SK-N-SH (cell line): ENCODE measurements at regions of chr2 and their contacts with region 1.

Region 1: DNA sequence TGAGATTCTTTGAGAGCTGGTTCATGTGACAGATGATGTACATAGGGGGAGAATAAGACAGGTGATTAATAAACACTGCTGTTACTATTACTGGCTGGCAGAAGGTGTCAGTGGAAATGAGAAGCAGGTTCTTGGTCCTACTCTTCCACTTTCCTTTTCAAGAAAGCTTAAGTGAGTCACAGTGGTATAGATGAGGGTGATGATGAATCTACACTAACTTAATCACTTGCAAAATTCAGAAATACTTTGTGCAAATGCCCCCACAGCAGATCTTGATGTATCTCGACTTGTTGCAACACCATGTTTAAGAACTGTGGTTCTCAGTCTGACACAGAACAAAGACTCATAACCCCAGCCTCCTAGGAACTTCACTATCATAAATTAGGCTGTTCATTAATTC is 35.9 kb upstream of the MGAT5 start:
- DNase-seq: no peak
- H3K4me3 ChIP-seq: no peak overlapping the region
- H3K27ac ChIP-seq: no peak overlapping the region
- H3K4me1 ChIP-seq: peaks cover 0 to 19% of the 10 kb centered on the region in 2 experiments; a peak in 1 of 4 replicates
- H3K27me3 ChIP-seq: no peaks in the 10 kb centered on the region
- CTCF ChIP-seq: no peak
- EP300 ChIP-seq: no peak
- RAD21 ChIP-seq: no peak

Region 2: DNA sequence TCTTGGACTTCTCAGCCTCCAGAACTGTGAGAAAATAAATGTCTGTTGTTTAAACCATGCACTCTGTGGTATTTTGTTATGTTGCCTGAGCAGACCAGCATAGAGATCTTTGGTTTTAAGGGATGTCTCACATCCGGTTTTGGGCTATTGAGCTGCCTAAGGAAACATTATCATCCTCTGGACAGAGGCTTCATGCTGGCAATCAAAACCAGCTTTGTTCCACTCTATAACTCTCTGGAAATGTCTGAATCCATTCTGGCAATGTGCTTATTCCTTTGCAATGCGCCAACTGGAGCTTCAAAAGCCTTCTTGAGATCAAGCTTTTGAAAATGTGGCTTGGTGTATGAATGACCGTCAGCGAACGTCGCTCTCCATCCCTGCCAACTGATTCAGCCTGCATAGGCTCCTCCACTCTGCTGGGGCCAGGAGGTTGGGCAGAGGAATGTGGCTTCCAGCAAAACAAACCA is 147.6 kb before region 1 on chr2:
- CTCF ChIA-PET with region 1: no interaction called
- POLR2A ChIA-PET with region 1: no interaction called
- DNase-seq: no peak
- H3K4me3 ChIP-seq: no peak overlapping the region
- H3K27ac ChIP-seq: no peak overlapping the region
- H3K4me1 ChIP-seq: no peaks in the 10 kb centered on the region
- H3K27me3 ChIP-seq: no peaks in the 10 kb centered on the region
- CTCF ChIP-seq: no peak
- EP300 ChIP-seq: no peak
- RAD21 ChIP-seq: no peak

Region 3: GRCh38 chr2:134207564-134208209 is 10.2 kb before region 1 on chr2:
- CTCF ChIA-PET with region 1: interaction called, 31 read pairs
- POLR2A ChIA-PET with region 1: no interaction called
- DNase-seq: peak; percentile 44
- H3K4me3 ChIP-seq: no peak overlapping the region; a peak in 1 of 4 replicates
- H3K27ac ChIP-seq: no peak overlapping the region
- H3K4me1 ChIP-seq: peaks cover 6 to 17% of the 10 kb centered on the region in 2 experiments; a peak in 3 of 4 replicates
- H3K27me3 ChIP-seq: no peaks in the 10 kb centered on the region
- CTCF ChIP-seq: peak; percentile 76
- EP300 ChIP-seq: no peak
- RAD21 ChIP-seq: peak; percentile 70